Natural killer cell (primary cell): ENCODE measurements at regions of chr6 and their contacts with region 1.

Region 1: GRCh38 chr6:109705258-109705657 is 14.2 kb downstream of the FIG4 start:
- DNase-seq: peak; percentile 74 to 89
- ATAC-seq: peak; percentile 77 to 94 (median 79)
- H3K4me3 ChIP-seq: no peak overlapping the region
- H3K4me3 Mint-ChIP-seq: peak overlapping the region; percentile 58
- H3K27ac ChIP-seq: no peak overlapping the region
- H3K27ac Mint-ChIP-seq: peak overlapping the region; percentile 88 to 93
- H3K4me1 ChIP-seq: peaks cover 9% of the 10 kb centered on the region
- H3K4me1 Mint-ChIP-seq: peaks cover 89% of the 10 kb centered on the region in 2 donors
- H3K27me3 ChIP-seq: no peaks in the 10 kb centered on the region
- H3K27me3 Mint-ChIP-seq: no peaks in the 10 kb centered on the region
- CTCF ChIP-seq: peak; percentile 97

Region 2: DNA sequence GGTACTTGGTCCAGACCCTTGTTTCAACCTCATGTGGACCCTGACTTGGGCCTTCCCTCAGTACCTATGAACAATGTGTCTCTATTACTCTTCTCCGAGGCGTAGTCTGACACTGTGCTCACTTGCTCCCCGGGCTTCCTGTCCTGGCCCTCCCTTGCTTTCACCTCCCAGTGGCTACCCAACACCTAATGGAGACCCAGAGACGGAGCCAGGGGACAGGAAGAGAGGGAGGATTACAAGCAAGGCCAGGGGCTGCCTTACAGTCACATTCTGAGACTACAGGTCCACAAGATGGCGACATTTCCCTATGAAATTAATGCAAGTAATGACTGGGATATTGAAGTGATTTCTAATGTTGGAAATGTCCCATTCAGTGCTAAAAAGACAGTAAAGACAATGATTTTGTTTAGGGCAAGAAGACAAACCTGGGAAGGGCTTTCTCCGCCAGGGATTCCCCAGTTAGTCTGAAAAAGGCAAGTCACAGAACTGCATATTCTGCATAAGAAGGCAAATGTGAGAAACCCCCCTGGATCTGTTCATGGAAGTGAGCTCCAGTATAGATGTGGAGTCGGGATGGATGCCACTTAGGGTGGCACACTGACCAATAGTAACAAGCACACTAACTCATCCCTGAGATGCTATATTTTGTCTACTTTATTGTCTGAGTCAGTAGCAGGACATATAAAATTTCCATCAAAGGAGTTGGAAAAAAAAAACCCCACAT is 178.2 kb before region 1 on chr6:
- intact Hi-C with region 1: loop called (anchors 10 kb)
- DNase-seq: peak in 1 of 2 donors; percentile 79
- ATAC-seq: peak; percentile 67 to 79 (median 68)
- H3K4me3 ChIP-seq: no peak overlapping the region
- H3K4me3 Mint-ChIP-seq: no peak overlapping the region
- H3K27ac ChIP-seq: no peak overlapping the region
- H3K27ac Mint-ChIP-seq: no peak overlapping the region
- H3K4me1 ChIP-seq: no peaks in the 10 kb centered on the region
- H3K4me1 Mint-ChIP-seq: peaks cover 0 to 5% of the 10 kb centered on the region in 2 donors
- H3K27me3 ChIP-seq: no peaks in the 10 kb centered on the region
- H3K27me3 Mint-ChIP-seq: no peaks in the 10 kb centered on the region
- CTCF ChIP-seq: peak; percentile 62

Region 3: GRCh38 chr6:109783250-109783986 is 78.2 kb after region 1 on chr6:
- intact Hi-C with region 1: loop called (anchors 1 kb)
- DNase-seq: peak in 1 of 2 donors; percentile 16
- ATAC-seq: peak; percentile 42 to 69 (median 56)
- H3K4me3 ChIP-seq: no peak overlapping the region
- H3K4me3 Mint-ChIP-seq: no peak overlapping the region
- H3K27ac ChIP-seq: no peak overlapping the region
- H3K27ac Mint-ChIP-seq: no peak overlapping the region
- H3K4me1 ChIP-seq: no peaks in the 10 kb centered on the region
- H3K4me1 Mint-ChIP-seq: peaks cover 0 to 5% of the 10 kb centered on the region in 2 donors
- H3K27me3 ChIP-seq: no peaks in the 10 kb centered on the region
- H3K27me3 Mint-ChIP-seq: no peaks in the 10 kb centered on the region
- CTCF ChIP-seq: peak; percentile 42

Region 4: GRCh38 chr6:110179401-110180227 is 474.4 kb after region 1 on chr6 and contains the start of gene WASF1:
- intact Hi-C with region 1: loop called (anchors 10 kb)
- DNase-seq: peak; percentile 86 to 95
- ATAC-seq: peak; percentile 91 to 98 (median 94)
- H3K4me3 ChIP-seq: peak within 1 kb of the TSS; percentile 83
- H3K4me3 Mint-ChIP-seq: peak within 1 kb of the TSS; percentile 90
- H3K27ac ChIP-seq: peak within 1 kb of the TSS; percentile 75
- H3K27ac Mint-ChIP-seq: no peak within 1 kb of the TSS
- H3K4me1 ChIP-seq: peaks cover 22% of the 10 kb centered on the region
- H3K4me1 Mint-ChIP-seq: peaks cover 6 to 11% of the 10 kb centered on the region in 2 donors
- H3K27me3 ChIP-seq: peaks cover 9% of the 10 kb centered on the region
- H3K27me3 Mint-ChIP-seq: peaks cover 17 to 19% of the 10 kb centered on the region in 2 donors
- CTCF ChIP-seq: no peak
- total RNA-seq, gene WASF1: 0.25 to 0.90 (median 0.45) TPM

Region 5: DNA sequence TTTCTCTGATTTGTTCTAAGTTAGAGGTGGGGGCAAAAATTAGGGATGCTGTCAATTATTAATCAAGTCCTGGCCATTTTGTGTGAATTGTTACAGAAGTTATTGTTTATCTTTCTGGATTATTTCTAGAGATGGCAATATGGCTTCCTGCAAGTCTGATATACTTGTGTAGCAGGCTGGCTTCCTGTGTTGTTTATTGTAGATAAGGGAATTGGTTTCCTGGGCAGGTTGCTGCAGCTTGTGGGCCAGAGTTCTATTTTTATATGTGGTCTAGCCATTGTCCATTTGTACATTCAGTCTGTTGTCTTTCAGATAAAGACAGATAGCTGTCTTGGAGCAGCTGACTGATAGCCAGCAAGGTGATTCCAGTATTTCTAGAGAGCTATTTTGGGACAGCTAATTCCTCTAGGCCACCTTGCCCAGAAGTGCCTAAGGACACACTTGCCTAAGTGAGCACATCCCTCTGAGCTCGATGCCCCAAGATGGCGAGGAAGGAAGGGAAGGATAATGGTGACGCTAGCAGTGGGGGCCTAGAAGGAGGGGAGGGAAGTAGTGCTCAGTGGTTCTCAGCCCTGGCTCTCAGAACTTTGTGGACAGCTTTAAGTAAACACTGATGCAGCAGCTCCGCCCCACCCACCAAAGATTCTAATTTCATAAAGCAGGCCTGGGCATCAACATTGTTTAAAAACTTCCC is 684.6 kb after region 1 on chr6:
- intact Hi-C with region 1: loop called (anchors 1 kb)
- DNase-seq: no peak
- ATAC-seq: peak; percentile 42 to 82 (median 50)
- H3K4me3 ChIP-seq: no peak overlapping the region
- H3K4me3 Mint-ChIP-seq: peak overlapping the region; percentile 73
- H3K27ac ChIP-seq: peak overlapping the region; percentile 24
- H3K27ac Mint-ChIP-seq: peak overlapping the region; percentile 70 to 73
- H3K4me1 ChIP-seq: peaks cover 7% of the 10 kb centered on the region
- H3K4me1 Mint-ChIP-seq: peaks cover 21 to 26% of the 10 kb centered on the region in 2 donors
- H3K27me3 ChIP-seq: no peaks in the 10 kb centered on the region
- H3K27me3 Mint-ChIP-seq: no peaks in the 10 kb centered on the region
- CTCF ChIP-seq: no peak